ENCODE measurements at regions of chr1 and their contacts with region 1.

Region 1: GRCh38 chr1:43073490-43074230 is 98.4 kb downstream of the EBNA1BP2 start:
- DNase-seq: peak; percentile 80
- H3K4me3 Mint-ChIP-seq: no peak overlapping the region
- H3K27ac Mint-ChIP-seq: no peak overlapping the region
- H3K4me1 Mint-ChIP-seq: peaks cover 4% of the 10 kb centered on the region
- H3K27me3 Mint-ChIP-seq: no peaks in the 10 kb centered on the region

Region 2: GRCh38 chr1:42777852-42778251 is 295.8 kb before region 1 on chr1:
- CTCF ChIA-PET with region 1: interaction called, 55 read pairs
- POLR2A ChIA-PET with region 1: no interaction called
- intact Hi-C with region 1: loop called (anchors 1 kb)
- DNase-seq: peak; percentile 41
- H3K4me3 Mint-ChIP-seq: no peak overlapping the region
- H3K27ac Mint-ChIP-seq: no peak overlapping the region
- H3K4me1 Mint-ChIP-seq: peaks cover 20% of the 10 kb centered on the region
- H3K27me3 Mint-ChIP-seq: no peaks in the 10 kb centered on the region

Region 3: DNA sequence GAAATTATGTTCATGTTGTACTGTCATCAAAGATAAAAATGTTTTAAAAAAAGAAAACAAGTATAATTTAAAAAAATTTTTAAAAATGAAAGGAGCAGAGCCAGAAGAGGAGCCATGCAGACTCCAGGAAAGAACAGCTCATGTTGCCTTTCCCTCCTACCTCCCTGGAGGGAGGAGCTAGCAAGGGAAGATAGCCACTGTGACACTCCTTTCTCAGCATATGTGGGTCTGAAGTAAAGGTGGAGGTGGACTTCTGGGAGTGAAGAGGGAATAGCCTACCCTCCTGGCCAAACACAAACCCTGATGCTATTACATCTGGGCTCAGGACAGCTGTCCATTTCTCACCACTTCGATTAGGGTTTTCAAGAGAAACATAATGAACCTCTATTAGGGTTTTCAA is 169.2 kb before region 1 on chr1:
- CTCF ChIA-PET with region 1: interaction called, 15 read pairs
- POLR2A ChIA-PET with region 1: no interaction called
- intact Hi-C with region 1: no loop called
- DNase-seq: no peak
- H3K4me3 Mint-ChIP-seq: no peak overlapping the region
- H3K27ac Mint-ChIP-seq: no peak overlapping the region
- H3K4me1 Mint-ChIP-seq: no peaks in the 10 kb centered on the region
- H3K27me3 Mint-ChIP-seq: peaks cover 10% of the 10 kb centered on the region

Region 4: DNA sequence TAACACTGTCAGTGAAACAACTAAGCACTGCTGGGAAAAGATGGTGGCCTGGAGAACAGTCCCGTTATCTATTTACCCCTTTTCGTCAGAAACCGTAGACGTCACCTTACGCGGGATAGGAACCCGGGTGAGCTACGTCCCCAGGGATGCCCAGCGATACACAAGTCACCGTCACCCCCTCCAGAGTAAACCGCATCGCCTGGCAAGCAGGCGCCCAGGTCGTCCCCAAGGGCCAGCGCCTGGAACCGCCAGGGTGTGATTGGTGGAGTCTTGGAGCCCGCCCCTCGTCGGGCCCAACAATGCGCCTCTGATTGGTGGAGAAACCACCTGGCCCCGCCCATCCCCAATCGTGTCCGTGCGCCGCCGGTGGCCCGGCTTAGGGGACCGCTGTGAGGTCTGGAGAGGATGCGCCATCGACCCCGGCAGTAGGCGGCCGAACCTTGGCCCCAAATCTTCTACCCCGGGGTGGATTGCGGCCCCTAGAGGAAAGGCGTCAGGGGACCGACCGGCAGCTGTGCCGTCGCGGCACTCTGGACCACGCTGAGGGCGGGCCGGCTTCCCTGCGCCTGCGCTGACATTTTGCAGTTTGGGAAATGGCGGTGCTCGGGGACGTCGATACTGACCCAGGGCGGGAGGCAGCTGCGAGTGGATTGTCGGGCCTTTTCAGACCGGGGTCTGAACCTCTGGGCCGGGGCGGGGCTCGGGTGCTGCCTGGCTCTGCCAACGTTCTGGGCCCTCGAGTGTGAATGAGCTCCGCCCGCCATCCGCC is 149.4 kb before region 1 on chr1:
- CTCF ChIA-PET with region 1: interaction called, 536 read pairs
- POLR2A ChIA-PET with region 1: interaction called, 10 read pairs
- intact Hi-C with region 1: loop called (anchors 1 kb)
- DNase-seq: peak; percentile 95
- H3K4me3 Mint-ChIP-seq: peak overlapping the region; percentile 89
- H3K27ac Mint-ChIP-seq: peak overlapping the region; percentile 97
- H3K4me1 Mint-ChIP-seq: peaks cover 22% of the 10 kb centered on the region
- H3K27me3 Mint-ChIP-seq: no peaks in the 10 kb centered on the region

Region 5: GRCh38 chr1:42973304-42973703 is 100.4 kb before region 1 on chr1:
- CTCF ChIA-PET with region 1: interaction called, 10 read pairs
- POLR2A ChIA-PET with region 1: no interaction called
- intact Hi-C with region 1: no loop called
- DNase-seq: no peak
- H3K4me3 Mint-ChIP-seq: no peak overlapping the region
- H3K27ac Mint-ChIP-seq: no peak overlapping the region
- H3K4me1 Mint-ChIP-seq: no peaks in the 10 kb centered on the region
- H3K27me3 Mint-ChIP-seq: no peaks in the 10 kb centered on the region

Region 6: DNA sequence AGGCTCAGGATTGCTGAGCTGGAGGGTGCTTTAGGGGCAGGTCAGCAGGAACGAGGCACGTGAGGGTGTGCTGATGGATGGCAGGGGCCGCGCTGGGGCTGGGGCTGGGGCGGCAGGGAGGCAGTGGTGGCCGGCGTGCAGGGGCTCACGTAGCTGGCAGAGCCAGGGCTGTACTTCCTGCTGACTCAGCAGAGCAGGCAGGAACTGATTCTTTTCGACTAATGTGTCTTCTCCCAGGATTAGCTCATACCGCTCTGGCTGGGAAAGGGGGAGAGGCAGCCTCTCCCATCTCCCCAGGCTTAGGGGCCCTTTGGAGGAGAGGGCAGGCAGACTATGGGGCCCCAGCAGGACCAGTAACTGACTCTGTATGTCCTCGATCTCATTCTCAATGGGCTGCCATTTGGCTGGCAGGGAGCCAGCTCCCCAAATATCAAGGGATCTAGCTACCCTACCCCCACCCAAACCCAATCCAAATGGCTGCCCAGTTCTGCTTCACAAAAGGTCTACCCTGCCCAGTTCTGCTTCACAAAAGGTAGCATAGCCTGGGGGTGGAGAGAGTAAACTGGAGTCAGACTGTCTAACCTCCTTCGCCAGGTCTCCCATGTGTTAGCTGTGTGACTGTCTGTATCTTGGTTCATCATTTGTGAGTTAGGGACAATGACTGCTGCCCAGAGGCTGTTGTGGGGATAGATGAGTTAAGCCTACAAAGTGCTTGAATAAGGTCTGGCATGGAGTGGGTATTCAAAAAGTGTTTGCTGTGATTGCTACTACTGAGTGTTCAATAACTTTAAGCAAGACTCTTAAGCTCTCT is 14.9 kb before region 1 on chr1:
- CTCF ChIA-PET with region 1: interaction called, 21 read pairs
- POLR2A ChIA-PET with region 1: no interaction called
- intact Hi-C with region 1: no loop called
- DNase-seq: peak; percentile 35
- H3K4me3 Mint-ChIP-seq: no peak overlapping the region
- H3K27ac Mint-ChIP-seq: no peak overlapping the region
- H3K4me1 Mint-ChIP-seq: peaks cover 13% of the 10 kb centered on the region
- H3K27me3 Mint-ChIP-seq: peaks cover 3% of the 10 kb centered on the region

Measured in activated CD4-positive, alpha-beta memory T cell treated with anti-CD3 and anti-CD28 coated beads for 36 hours (primary cell).